Cardiac septum (tissue), 1 donor: ENCODE measurements at regions of chr5 and their contacts with region 1.

Region 1: GRCh38 chr5:139949710-139950109 is 93.4 kb downstream of the NRG2 start:
- DNase-seq: peak; percentile 79

Region 2: DNA sequence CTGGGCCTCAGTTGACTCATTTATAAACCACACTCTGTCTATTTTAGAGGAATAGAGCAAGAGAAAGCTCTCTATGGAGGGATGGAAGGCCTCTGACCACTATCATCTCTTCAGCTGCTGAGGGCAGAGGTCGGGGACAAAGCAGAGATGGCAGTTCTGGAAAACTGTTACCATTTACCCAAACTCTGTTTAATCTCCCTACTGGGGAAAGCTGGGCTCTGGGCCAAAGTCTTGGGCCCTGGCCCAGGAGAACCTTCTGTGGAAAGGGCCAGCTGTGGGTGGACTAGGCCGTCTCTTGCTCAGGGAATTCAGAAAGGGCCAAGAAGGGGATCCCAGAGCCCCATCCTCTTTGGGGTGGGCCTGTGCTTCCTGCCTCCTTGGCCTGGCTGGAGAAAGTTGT is 54.1 kb before region 1 on chr5:
- intact Hi-C with region 1: loop called (anchors 5 kb)
- DNase-seq: peak; percentile 44

Region 3: DNA sequence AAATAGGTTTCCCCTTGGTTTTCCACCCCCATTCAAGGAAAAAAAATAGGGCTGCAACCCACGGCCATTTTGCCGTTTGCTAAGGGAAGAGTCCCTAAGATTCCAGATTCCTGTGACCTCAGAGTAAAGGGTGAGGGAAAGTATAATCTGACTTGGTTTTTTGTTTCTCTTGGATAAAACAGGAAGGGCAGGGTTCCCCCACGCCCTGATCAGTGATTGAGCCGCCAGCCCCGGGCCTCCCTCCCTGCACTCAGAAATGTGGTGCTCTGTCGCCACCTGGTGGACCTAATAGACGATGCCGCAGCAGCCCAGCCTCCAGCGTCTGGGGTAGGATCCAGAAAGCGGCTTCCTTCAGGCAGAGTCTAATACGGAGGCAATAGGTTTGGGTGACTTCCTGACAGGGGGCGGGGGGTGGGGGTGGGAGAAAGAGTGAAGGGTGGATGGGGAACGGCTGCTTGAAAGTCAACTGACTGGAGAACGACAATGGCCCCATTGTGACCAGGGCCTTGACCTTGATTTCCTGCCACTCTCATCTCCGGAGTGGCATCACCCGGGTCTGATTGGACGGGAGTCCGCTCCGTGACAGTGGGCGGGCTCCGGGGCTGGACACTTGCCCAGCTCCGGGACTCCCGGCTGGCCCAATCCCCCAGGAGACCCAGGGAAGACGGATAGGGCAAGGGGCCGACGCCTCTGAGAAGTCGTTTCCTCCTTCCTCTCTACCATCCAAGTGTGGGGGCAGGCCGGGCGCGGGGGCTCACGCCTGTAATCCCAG is 207.5 kb after region 1 on chr5:
- intact Hi-C with region 1: no loop called
- DNase-seq: peak; percentile 96